ENCODE measurements at regions of chr12 and their contacts with region 1.

Region 1: DNA sequence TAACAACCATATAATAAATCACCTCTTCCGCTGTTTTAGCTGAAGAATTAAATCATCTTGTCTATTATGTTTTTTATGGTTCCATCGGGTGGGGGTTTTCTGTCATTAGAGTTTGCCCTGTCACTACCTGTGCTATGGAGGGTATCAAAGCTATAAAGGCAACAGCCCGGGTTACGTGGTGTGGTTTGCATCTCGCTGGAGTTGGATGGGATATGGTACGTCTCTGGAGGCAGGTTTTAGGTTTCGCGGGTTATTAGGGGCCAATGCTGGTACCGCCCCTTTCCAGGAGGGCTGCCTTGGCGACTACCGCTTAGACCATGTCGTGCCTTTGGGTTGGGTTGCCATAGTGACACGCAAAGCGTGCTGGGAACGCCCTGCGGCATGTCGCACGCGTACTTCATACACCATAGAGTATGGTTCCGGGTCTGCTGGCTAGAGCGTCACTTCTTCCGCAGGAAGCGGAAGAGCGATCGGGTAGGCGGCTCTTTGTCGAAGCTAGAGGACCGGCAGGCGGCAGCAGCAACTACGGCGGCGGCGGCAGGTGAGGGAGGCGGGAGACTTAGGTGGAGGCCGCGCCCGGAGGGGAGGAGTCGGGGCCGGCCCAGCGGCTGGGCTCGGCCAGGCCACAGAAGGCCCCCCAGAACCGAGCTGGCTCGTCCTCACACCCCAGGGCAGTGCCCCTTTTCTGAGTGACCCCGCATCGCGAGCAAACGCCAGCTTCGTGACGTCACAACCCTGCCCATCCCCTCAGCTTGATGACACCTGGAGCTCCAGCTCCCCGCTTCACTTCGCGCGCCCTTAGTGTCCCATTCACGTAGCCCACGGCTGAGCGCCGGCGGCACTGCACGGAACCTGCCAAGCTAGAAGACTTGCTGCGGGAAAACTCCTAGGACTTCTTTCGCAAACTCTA is at the start of gene ZC3H10:
- DNase-seq: peak; percentile 99
- H3K4me3 Mint-ChIP-seq: peak within 1 kb of the TSS; percentile 97
- H3K27ac Mint-ChIP-seq: peak within 1 kb of the TSS; percentile 100
- H3K4me1 Mint-ChIP-seq: peaks cover 35% of the 10 kb centered on the region
- H3K27me3 Mint-ChIP-seq: peaks cover 3% of the 10 kb centered on the region
- total RNA-seq, gene ZC3H10: 8.9 and 11.2 TPM in 2 replicates

Region 2: DNA sequence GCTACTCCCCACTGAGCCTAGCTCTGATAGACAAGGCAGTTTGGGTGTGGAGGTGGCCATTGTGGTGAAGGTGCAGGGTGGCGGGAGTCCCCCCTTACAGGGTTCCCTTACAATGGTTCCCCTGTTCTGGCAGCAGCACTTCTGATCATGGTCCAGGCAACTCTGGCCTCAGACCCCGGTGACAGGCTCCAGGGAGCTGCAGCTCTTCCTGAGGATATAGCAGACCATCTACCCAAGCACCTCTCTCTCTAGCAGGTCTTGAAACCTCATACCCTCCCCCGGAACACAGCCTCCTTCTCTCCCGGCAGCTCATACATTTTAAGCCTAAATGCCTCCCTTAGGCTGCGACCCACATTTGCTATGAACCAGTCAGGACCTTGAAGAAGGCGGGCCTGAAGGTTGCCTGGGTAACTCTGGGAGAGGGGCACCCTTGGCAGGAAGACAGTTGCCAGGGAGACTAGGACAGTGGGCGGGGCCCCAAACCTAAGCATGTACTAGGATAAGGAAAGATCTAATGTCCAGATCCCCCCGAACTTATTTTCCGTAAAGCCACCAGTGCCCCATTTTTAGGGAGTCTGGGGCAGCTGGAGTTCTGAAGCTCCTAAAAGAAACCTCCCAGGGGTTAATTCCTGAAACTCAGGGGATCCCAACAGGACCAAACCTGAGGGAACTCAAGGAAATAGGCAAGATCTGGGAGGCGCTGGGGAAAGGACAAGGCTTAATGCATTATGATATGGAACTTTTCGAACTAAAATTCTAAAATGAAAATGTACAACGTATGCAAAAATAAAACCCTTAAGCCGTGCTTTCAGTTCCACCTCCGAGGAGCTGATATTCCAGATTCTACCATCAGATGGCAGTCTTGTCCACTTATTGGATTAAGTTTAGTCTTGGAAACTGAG is 379.7 kb before region 1 on chr12:
- intact Hi-C with region 1: loop called (anchors 2 kb)
- DNase-seq: peak; percentile 96
- H3K4me3 Mint-ChIP-seq: peak overlapping the region; percentile 88
- H3K27ac Mint-ChIP-seq: peak overlapping the region; percentile 85
- H3K4me1 Mint-ChIP-seq: peaks cover 31% of the 10 kb centered on the region
- H3K27me3 Mint-ChIP-seq: peaks cover 4% of the 10 kb centered on the region

Region 3: DNA sequence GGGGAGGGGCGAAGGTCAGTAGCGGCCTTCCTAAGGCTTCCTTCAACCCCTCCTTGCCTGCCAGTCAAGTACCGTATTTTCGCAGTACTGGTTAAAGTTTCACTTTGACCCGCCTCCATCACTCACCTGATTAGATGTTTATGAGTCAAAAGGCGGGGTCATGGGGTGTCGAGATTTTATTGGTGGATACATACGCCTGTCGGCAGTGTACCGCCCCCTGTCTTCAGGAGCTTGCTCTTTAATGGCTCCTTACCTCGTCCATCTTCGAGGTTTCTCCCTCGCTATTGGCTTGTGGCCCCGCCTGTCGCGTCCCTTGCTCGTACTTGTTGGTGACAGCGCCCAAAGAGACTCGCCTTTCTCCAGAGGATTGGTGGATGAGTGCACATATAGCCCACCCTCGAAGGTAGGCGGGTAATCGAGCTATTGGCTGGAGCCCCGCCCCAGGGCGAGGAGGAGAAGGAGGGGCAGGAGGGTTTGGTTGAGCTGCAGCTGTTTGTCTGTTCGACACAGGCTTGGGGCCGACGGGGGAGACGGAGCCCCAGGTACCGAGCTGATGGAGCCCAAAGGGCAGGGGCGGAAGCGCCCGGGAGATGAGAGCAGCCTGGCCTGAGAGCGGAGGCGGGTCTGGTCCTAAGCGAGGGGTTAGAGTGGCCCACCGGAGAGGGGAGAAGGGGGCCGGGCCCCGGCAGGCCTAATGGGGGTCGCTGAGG is 144.3 kb before region 1 on chr12 and contains the start of gene RAB5B:
- intact Hi-C with region 1: loop called (anchors 1 kb)
- DNase-seq: peak; percentile 99
- H3K4me3 Mint-ChIP-seq: no peak within 1 kb of the TSS
- H3K27ac Mint-ChIP-seq: no peak within 1 kb of the TSS
- H3K4me1 Mint-ChIP-seq: peaks cover 28% of the 10 kb centered on the region
- H3K27me3 Mint-ChIP-seq: no peaks in the 10 kb centered on the region
- total RNA-seq, gene RAB5B: 39.0 and 40.2 TPM in 2 replicates

Region 4: GRCh38 chr12:56104109-56104814 is 13.8 kb before region 1 on chr12 and contains the start of gene PA2G4:
- intact Hi-C with region 1: loop called (anchors 1 kb)
- DNase-seq: peak; percentile 100
- H3K4me3 Mint-ChIP-seq: peak within 1 kb of the TSS; percentile 98
- H3K27ac Mint-ChIP-seq: peak within 1 kb of the TSS; percentile 98
- H3K4me1 Mint-ChIP-seq: peaks cover 38% of the 10 kb centered on the region
- H3K27me3 Mint-ChIP-seq: no peaks in the 10 kb centered on the region
- total RNA-seq, gene PA2G4: 453 and 472 TPM in 2 replicates

Region 5: DNA sequence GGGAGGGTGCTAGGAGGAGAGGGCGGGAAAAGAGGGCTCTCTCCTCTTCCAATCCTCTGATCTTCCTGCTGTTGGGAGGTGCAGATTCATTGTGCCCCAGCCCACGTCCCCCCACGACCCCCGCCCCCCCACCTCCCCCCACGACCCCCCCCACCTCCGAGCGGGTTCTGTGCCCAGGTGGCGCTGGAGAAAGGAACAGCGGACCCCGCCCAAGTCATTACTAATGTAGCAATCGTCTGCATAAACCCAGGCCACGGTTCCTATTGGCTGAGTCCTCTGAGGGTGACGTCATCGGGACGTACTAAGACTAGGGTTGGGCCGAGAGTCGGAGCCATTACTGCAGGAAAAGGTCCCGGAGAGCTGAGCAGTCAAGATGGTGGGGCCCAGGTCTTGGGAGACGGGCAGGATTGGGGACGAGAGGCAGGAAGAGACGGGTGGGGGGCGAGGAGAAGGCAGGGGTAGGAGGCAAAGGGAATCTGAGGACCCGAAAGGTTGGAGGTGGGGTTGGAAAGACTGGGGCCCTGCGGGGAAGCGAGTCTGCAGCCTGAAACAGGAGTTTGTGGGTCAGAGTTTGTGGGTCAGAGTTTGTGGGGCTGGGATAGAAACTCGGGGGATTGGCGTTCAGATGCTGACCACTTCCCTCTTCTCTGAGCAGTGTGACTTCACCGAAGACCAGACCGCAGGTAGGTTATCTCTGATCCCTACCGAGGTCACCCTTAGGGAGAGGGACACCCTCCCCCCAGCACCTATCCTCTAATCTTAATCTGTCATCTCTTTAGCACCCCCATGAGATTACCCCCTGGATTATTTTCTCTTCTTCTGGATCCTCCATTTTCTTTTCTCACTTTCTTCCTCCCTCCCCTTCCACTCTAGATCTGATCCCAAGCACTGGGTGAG is 40.2 kb after region 1 on chr12 and contains the start of gene MYL6:
- intact Hi-C with region 1: loop called (anchors 1 kb)
- DNase-seq: peak; percentile 98
- H3K4me3 Mint-ChIP-seq: peak within 1 kb of the TSS; percentile 100
- H3K27ac Mint-ChIP-seq: peak within 1 kb of the TSS; percentile 94
- H3K4me1 Mint-ChIP-seq: peaks cover 45% of the 10 kb centered on the region
- H3K27me3 Mint-ChIP-seq: no peaks in the 10 kb centered on the region
- total RNA-seq, gene MYL6: 717 and 752 TPM in 2 replicates

Region 6: GRCh38 chr12:56258057-56258819 is 140.2 kb after region 1 on chr12 and contains the start of gene ANKRD52:
- intact Hi-C with region 1: loop called (anchors 2 kb)
- DNase-seq: peak; percentile 96
- H3K4me3 Mint-ChIP-seq: peak within 1 kb of the TSS; percentile 96
- H3K27ac Mint-ChIP-seq: peak within 1 kb of the TSS; percentile 84
- H3K4me1 Mint-ChIP-seq: peaks cover 17% of the 10 kb centered on the region
- H3K27me3 Mint-ChIP-seq: no peaks in the 10 kb centered on the region
- total RNA-seq, gene ANKRD52: 68.0 and 69.0 TPM in 2 replicates

Region 7: GRCh38 chr12:56359851-56360767 is 242.1 kb after region 1 on chr12 and contains the start of gene STAT2:
- intact Hi-C with region 1: loop called (anchors 2 kb)
- DNase-seq: peak; percentile 100
- H3K4me3 Mint-ChIP-seq: peak within 1 kb of the TSS; percentile 94
- H3K27ac Mint-ChIP-seq: peak within 1 kb of the TSS; percentile 95
- H3K4me1 Mint-ChIP-seq: peaks cover 31% of the 10 kb centered on the region
- H3K27me3 Mint-ChIP-seq: no peaks in the 10 kb centered on the region
- total RNA-seq, gene STAT2: 64.9 and 68.4 TPM in 2 replicates

Region 8: GRCh38 chr12:56657416-56658379 is 539.7 kb after region 1 on chr12:
- intact Hi-C with region 1: no loop called
- DNase-seq: no peak
- H3K4me3 Mint-ChIP-seq: peak overlapping the region; percentile 30
- H3K27ac Mint-ChIP-seq: peak overlapping the region; percentile 73
- H3K4me1 Mint-ChIP-seq: peaks cover 4% of the 10 kb centered on the region
- H3K27me3 Mint-ChIP-seq: no peaks in the 10 kb centered on the region

Measured in activated CD4-positive, alpha-beta T cell treated with anti-CD3 and anti-CD28 coated beads, Interleukin-2, amount 10 ng/mL, durations not matched to agents 24 days and 14 days (primary cell).